Right ventricle myocardium inferior (tissue), 1 donor: ENCODE measurements at regions of chr6 and their contacts with region 1.

Region 1: DNA sequence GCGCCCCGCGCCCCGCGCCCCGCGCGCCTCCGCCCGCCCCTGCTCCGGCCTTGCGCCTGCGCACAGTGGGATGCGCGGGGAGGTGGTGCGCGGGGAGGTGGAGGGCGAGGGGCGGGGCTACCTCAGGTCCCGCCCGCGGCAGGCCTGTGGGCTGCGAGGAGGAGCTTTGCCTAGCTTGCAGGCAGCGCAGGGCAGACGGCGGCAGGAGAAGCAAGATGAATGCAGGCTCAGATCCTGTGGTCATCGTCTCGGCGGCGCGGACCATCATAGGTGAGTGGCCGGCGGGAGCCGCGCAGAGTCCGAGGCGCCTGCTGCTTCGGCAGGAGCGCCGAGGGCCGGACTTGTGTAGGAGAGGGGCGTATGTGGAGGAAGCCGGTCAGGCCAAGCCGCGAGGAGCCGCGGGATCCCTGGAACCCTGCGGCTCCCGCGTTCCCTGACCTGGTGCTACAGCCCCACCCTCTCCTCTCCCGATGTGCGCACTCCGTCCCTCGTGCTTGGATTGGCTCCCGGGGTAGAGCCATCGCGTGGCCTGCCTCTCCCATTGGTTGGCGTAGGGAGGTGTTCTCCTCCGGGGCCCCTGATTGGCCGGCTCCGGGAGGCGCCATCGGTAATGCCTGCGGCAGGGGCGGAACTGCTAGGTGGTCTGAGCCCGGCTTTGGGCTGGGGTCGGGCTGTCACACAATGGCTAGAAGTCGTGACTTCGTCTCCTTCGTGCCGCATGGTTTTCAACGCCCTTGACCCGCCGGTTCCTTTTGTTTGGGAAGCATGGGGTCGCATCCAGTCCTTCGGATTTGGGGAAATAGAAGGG is at the start of gene ACAT2:
- DNase-seq: peak; percentile 97
- ATAC-seq: peak; percentile 99
- total RNA-seq, gene ACAT2: 5.2 TPM

Region 2: GRCh38 chr6:159679091-159680077 is 82.7 kb before region 1 on chr6:
- intact Hi-C with region 1: no loop called
- DNase-seq: no peak
- ATAC-seq: no peak

Region 3: DNA sequence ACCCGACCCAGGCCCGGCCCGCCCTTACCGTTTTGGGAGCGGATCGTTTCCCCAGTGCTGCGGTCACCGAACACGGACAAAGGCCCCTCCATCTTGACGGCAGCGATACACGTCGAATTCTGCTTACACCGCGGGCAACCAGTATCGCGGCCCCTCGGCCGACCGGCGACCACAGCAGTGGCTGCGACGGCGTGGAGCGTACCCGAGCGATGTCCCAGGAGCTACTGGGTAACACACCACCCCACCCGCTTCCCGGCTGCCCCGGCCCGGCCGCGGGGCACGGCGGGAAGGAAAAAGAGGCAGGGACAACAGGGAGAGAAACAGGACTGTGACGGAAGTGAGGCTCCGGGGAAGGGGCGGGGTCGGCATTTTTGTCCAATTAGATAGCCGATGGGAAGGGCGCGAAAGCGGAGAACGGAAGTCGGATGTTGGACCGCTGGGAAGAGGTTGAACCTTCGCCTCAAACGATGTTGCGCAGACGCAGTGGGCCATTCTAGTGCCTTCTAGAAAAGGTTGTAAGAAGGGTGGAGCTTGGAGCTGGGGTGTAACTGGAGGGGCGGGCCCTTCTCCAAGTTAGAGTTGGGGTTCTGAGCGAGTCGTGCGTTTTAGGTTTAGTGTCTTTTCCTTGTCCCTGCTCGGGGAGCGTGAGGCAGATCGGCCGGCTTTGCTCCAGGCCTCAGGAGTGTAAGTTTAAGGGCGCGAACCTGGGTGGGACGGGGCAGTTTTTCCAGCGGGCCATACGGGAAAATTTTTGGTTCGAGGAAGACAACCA is 27.5 kb after region 1 on chr6 and contains the start of gene TCP1:
- intact Hi-C with region 1: loop called (anchors 1 kb)
- DNase-seq: peak; percentile 100
- ATAC-seq: peak; percentile 95
- total RNA-seq, gene TCP1: 170 TPM